H1 (cell line): ENCODE measurements at regions of chr7 and their contacts with region 1.

Region 1: DNA sequence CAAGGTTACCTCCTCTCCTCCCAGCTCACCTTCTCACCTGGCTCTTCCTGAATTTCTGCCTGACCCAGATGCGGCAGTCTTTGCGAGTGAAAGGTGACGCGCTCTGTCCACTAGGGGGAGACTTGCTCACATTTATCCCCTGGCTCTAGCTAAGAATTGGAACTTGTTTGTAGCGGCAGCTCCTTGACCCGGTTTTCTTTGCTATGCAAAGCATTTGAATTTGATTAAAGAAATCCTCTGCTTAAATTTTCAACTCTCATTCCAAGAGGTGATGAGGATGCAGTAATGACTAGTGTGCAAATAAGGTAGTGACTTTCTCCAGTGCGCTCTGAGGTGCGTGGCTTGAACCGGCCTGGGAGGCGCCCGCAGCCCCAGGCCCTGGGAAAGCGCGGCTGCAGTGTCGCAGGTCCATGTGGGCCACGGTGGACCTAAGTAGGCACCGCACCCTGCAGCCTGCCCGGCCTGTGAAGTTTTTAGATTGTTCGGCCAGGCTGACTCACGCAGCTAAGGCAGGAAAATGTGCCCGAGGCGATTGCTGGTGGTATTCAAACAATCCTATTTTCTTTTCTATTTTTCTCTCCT is 336.9 kb upstream of the NPSR1 start:
- DNase-seq: peak; percentile 49 to 74
- H3K4me3 ChIP-seq: peak overlapping the region; percentile 24 to 54 (median 36); a peak in 7 of 8 replicates
- H3K27ac ChIP-seq: no peak overlapping the region
- H3K4me1 ChIP-seq: no peaks in the 10 kb centered on the region; a peak in 2 of 7 replicates
- H3K27me3 ChIP-seq: no peaks in the 10 kb centered on the region
- CTCF ChIP-seq: peak; percentile 86 to 95 (median 88)
- EP300 ChIP-seq: 0 out of 3 replicates have a peak, but pooled peaks of 1 of the 2 experiments have one; percentile 9
- POLR2A ChIP-seq: no peak
- RAD21 ChIP-seq: peak; percentile 91 to 92

Region 2: DNA sequence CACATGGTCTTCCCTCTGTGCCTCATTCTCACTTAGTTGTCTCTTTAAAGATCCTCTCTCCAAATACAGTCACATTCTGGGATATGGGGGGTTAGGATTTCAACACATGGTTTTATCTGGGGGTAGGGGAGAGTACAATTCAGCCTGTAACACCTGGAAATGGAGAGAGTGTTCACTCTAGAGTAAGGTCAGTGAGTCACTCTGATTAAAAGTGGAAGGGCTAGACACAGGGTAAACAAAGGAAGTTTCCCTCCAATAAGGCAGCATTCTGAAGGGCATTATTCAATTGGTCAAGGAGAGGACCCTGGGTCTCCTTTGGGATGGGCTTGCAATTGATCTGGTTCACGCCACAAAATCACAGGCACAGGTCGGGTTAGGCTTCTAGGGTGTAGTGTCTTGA is 104.1 kb after region 1 on chr7:
- CTCF ChIA-PET with region 1: interaction called, 13 read pairs
- POLR2A ChIA-PET with region 1: no interaction called
- DNase-seq: no peak
- H3K4me3 ChIP-seq: no peak overlapping the region
- H3K27ac ChIP-seq: no peak overlapping the region
- H3K4me1 ChIP-seq: no peaks in the 10 kb centered on the region
- H3K27me3 ChIP-seq: no peaks in the 10 kb centered on the region
- CTCF ChIP-seq: no peak
- EP300 ChIP-seq: no peak
- POLR2A ChIP-seq: no peak
- RAD21 ChIP-seq: no peak

Region 3: DNA sequence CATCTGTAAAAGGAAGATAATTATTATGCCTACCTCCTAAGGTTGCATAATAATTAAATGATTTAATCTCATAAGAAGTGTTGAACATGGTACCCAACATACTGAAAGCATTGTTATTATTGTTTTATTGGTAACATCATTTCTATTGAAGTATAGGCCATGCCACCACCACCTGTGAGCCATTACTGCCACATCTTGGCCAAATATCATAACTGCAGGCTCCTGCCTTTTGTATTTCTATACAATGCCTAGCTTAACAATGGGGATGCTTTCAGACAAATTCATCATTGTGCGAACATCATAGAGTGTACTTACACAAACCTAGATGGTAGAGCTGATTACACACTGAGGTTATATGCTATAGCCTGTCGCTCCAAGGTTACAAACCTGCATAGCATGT is 275.8 kb after region 1 on chr7:
- CTCF ChIA-PET with region 1: interaction called, 74 read pairs
- POLR2A ChIA-PET with region 1: no interaction called
- DNase-seq: no peak
- H3K4me3 ChIP-seq: no peak overlapping the region
- H3K27ac ChIP-seq: no peak overlapping the region
- H3K4me1 ChIP-seq: no peaks in the 10 kb centered on the region; a peak in 1 of 7 replicates
- H3K27me3 ChIP-seq: no peaks in the 10 kb centered on the region
- CTCF ChIP-seq: peak in 2 of 3 experiments; percentile 60 to 72; a peak in 3 of 4 replicates
- EP300 ChIP-seq: no peak
- POLR2A ChIP-seq: no peak
- RAD21 ChIP-seq: peak; percentile 85 to 87